B cell (primary cell): ENCODE measurements at regions of chr17 and their contacts with region 1.

Region 1: GRCh38 chr17:40791787-40792436 is 7.8 kb downstream of the KRT28 start:
- DNase-seq: peak; percentile 25
- ATAC-seq: no peak
- H3K4me3 ChIP-seq: no peak overlapping the region
- H3K4me3 Mint-ChIP-seq: no peak overlapping the region
- H3K27ac ChIP-seq: no peak overlapping the region
- H3K27ac Mint-ChIP-seq: no peak overlapping the region
- H3K4me1 ChIP-seq: no peaks in the 10 kb centered on the region
- H3K4me1 Mint-ChIP-seq: no peaks in the 10 kb centered on the region
- H3K27me3 ChIP-seq: peaks cover 0 to 17% (median 2%) of the 10 kb centered on the region in 4 experiments
- H3K27me3 Mint-ChIP-seq: peaks cover 35% of the 10 kb centered on the region
- CTCF ChIP-seq: peak; percentile 41

Region 2: DNA sequence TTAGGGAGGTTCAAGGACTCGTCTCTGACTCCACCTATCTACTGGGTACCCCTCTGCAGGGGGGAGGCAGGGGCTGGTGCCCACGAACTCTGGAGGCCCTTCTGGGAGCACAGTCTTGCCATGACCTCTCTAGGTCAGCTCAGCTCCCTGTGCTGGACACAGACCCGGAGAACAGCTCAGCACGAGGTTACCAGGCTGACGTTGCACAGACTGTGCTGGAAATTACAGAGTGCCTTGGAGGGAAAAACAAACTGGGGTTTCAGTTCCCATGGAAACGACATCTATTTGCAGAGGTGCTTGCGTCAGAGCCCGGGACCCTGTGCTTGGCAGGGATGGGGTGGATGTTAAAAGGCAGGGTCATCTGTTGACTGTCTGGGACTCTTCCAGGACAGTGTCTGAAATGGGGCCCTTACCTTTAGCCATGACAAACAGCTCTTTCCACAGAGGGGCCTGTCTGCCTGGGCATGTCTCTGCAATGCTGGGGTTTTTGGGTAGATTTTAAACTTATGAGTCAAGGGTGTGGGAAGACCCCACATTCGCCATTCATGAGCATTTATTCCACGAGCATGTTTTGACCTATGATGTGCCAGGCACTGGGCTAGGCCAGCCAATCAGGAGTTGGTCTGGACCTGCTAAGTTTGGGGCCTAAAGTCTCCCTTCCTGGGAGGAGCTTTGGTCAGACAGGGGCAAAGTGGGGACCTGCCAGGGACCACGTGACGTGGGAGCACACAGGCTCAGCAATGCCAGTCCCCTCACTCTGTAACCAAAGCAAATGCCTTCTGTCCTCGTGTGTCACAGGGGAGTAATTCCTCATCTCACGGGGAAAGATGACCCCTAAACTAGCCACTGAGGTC is 249.1 kb before region 1 on chr17:
- CTCF ChIA-PET with region 1: no interaction called
- POLR2A ChIA-PET with region 1: interaction called, 10 read pairs
- intact Hi-C with region 1: no loop called
- DNase-seq: peak; percentile 71
- ATAC-seq: peak; percentile 11
- H3K4me3 ChIP-seq: no peak overlapping the region
- H3K4me3 Mint-ChIP-seq: peak overlapping the region; percentile 63
- H3K27ac ChIP-seq: peak overlapping the region in 1 of 2 donors; percentile 30
- H3K27ac Mint-ChIP-seq: peak overlapping the region; percentile 89
- H3K4me1 ChIP-seq: peaks cover 48 to 61% of the 10 kb centered on the region in 2 donors
- H3K4me1 Mint-ChIP-seq: peaks cover 64% of the 10 kb centered on the region
- H3K27me3 ChIP-seq: no peaks in the 10 kb centered on the region
- H3K27me3 Mint-ChIP-seq: no peaks in the 10 kb centered on the region
- CTCF ChIP-seq: no peak

Region 3: GRCh38 chr17:40714473-40714872 is 77.4 kb before region 1 on chr17:
- CTCF ChIA-PET with region 1: interaction called, 3 read pairs
- POLR2A ChIA-PET with region 1: no interaction called
- intact Hi-C with region 1: loop called (anchors 1 kb)
- DNase-seq: no peak
- ATAC-seq: no peak
- H3K4me3 ChIP-seq: no peak overlapping the region
- H3K4me3 Mint-ChIP-seq: no peak overlapping the region
- H3K27ac ChIP-seq: no peak overlapping the region
- H3K27ac Mint-ChIP-seq: no peak overlapping the region
- H3K4me1 ChIP-seq: no peaks in the 10 kb centered on the region
- H3K4me1 Mint-ChIP-seq: no peaks in the 10 kb centered on the region
- H3K27me3 ChIP-seq: no peaks in the 10 kb centered on the region
- H3K27me3 Mint-ChIP-seq: peaks cover 35% of the 10 kb centered on the region
- CTCF ChIP-seq: no peak